Heart left ventricle (tissue), 16 donors: ENCODE measurements at regions of chr1 and their contacts with region 1.

Region 1: DNA sequence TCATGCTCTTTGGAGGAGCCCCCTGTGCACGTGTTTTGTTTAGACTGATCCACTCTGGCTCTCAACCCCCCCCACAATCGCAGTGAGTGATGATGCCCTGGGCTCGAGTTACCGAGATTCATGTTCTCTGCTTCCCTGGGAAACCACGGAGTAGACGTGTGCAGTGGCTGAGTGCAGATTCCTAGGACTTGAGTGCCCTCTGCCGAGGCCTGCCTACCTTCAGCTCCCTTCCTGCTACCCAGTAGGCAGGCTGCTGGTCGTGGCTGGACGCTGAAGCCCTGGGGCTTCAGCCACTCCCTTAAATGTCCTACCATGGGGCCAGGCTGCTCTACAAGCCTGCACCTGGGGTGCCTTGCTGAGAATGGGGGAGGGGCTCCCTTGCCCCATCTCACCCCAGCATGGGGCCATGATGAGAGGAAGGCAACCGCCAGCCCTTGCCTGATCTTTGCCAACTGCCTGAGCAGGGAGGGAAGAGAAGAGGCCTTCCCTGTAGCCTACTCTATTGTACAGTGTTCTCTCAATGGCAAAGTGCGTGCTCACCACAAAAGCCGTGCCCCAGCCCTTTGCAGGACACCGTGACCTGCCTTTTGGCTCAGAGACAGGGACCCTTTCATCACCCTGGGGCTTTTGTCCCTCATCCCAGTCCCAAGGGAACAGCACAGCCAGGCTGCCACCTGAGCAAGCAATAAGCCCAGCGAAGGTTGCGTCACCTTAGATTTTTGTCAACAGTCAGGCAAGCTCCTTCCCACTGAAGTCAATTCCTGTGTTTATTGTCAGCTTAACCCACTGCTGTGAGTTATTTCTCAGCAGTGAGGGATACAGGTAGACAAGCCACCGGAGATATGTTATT is 4.1 kb upstream of the GRIK3 start:
- DNase-seq: peak in 1 of 5 donors; percentile 42
- ATAC-seq: peak in 3 of 4 donors; percentile 64 to 85 (median 77)
- H3K4me3 ChIP-seq: no peak overlapping the region
- H3K27ac ChIP-seq: no peak overlapping the region
- H3K4me1 ChIP-seq: peaks cover 0 to 29% (median 1%) of the 10 kb centered on the region in 12 donors
- H3K27me3 ChIP-seq: peaks cover 40 to 100% (median 72%) of the 10 kb centered on the region in 9 donors
- CTCF ChIP-seq: peak in 9 of 12 donors; percentile 11 to 45 (median 32)
- POLR2A ChIP-seq: no peak

Region 2: GRCh38 chr1:36342481-36343478 is 695.7 kb before region 1 on chr1:
- intact Hi-C with region 1: no loop called
- DNase-seq: peak in 3 of 5 donors; percentile 53 to 75 (median 63)
- ATAC-seq: peak in 3 of 4 donors; percentile 65 to 80 (median 74)
- H3K4me3 ChIP-seq: no peak overlapping the region
- H3K27ac ChIP-seq: peak overlapping the region in 3 of 12 donors; percentile 20 to 70 (median 31)
- H3K4me1 ChIP-seq: peaks cover 0 to 36% (median 21%) of the 10 kb centered on the region in 12 donors
- H3K27me3 ChIP-seq: no peaks in the 10 kb centered on the region
- CTCF ChIP-seq: peak; percentile 60 to 78 (median 66)
- POLR2A ChIP-seq: no peak

Region 3: GRCh38 chr1:36516372-36517325 is 521.8 kb before region 1 on chr1:
- intact Hi-C with region 1: loop called in 1 of 10 experiments (anchors 5 kb)
- DNase-seq: peak in 4 of 5 donors; percentile 22 to 71 (median 46)
- ATAC-seq: peak in 3 of 4 donors; percentile 36 to 68 (median 67)
- H3K4me3 ChIP-seq: no peak overlapping the region
- H3K27ac ChIP-seq: no peak overlapping the region
- H3K4me1 ChIP-seq: no peaks in the 10 kb centered on the region
- H3K27me3 ChIP-seq: peaks cover 0 to 16% (median 0%) of the 10 kb centered on the region in 9 donors
- CTCF ChIP-seq: peak; percentile 46 to 80 (median 66)
- POLR2A ChIP-seq: no peak

Region 4: GRCh38 chr1:36576118-36576517 is 462.3 kb before region 1 on chr1:
- intact Hi-C with region 1: loop called in 6 of 10 experiments (anchors 1 to 10 kb)
- DNase-seq: peak; percentile 24 to 69 (median 39)
- ATAC-seq: peak in 3 of 4 donors; percentile 59 to 68 (median 68)
- H3K4me3 ChIP-seq: no peak overlapping the region
- H3K27ac ChIP-seq: no peak overlapping the region
- H3K4me1 ChIP-seq: no peaks in the 10 kb centered on the region
- H3K27me3 ChIP-seq: peaks cover 0 to 73% (median 24%) of the 10 kb centered on the region in 9 donors
- CTCF ChIP-seq: peak; percentile 58 to 76 (median 70)
- POLR2A ChIP-seq: no peak

Region 5: DNA sequence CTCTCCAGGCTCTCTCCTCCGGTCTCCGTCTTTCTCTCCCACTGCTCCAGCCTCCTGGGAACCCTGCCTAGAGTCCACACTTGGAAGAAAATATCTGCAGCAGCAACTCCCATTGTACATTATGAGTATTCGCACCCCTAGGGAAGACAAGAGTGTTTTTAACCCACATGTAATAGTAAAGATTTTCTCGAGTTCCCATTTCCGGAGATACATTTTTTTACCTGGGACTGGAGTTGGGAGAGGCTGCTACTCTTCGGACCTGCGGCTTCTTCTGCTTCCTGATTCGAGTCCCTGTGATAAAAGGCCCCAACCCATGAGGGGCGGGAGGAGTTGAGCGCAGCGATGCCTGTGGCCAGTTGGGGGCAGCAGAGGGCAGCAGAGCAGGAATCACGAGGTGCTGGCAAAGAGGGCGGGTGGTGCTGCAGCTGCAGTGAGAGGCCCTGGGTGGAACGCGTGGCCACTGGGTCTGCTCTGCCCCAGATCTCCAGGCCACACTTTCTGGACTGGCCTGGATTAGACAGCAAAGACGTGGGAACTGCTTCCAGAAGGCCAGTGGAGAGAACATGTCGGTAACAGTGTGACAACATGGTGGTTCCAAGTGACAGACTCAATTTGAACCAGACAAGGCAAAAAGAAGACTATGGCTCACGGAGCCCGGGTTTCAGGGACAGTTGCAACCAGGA is 334.8 kb before region 1 on chr1:
- intact Hi-C with region 1: loop called (anchors 1 to 10 kb)
- DNase-seq: peak; percentile 62 to 84 (median 68)
- ATAC-seq: peak; percentile 37 to 91 (median 90)
- H3K4me3 ChIP-seq: no peak overlapping the region
- H3K27ac ChIP-seq: no peak overlapping the region
- H3K4me1 ChIP-seq: no peaks in the 10 kb centered on the region
- H3K27me3 ChIP-seq: peaks cover 0 to 62% (median 11%) of the 10 kb centered on the region in 9 donors
- CTCF ChIP-seq: peak; percentile 68 to 84 (median 78)
- POLR2A ChIP-seq: no peak

Region 6: GRCh38 chr1:37001703-37002102 is 36.7 kb before region 1 on chr1:
- intact Hi-C with region 1: no loop called
- DNase-seq: no peak
- ATAC-seq: no peak
- H3K4me3 ChIP-seq: no peak overlapping the region
- H3K27ac ChIP-seq: no peak overlapping the region
- H3K4me1 ChIP-seq: peaks cover 0 to 8% (median 4%) of the 10 kb centered on the region in 12 donors
- H3K27me3 ChIP-seq: no peaks in the 10 kb centered on the region
- CTCF ChIP-seq: no peak
- POLR2A ChIP-seq: no peak